ENCODE measurements at regions of chr7 and their contacts with region 1.

Region 1: GRCh38 chr7:44587843-44588711 is 6.0 kb upstream of the TMED4 start:
- DNase-seq: peak; percentile 42
- H3K4me3 Mint-ChIP-seq: no peak overlapping the region
- H3K27ac Mint-ChIP-seq: no peak overlapping the region
- H3K4me1 Mint-ChIP-seq: peaks cover 10% of the 10 kb centered on the region
- H3K27me3 Mint-ChIP-seq: peaks cover 3% of the 10 kb centered on the region

Region 2: GRCh38 chr7:44921607-44922359 is 333.7 kb after region 1 on chr7:
- intact Hi-C with region 1: loop called (anchors 1 kb)
- DNase-seq: peak; percentile 86
- H3K4me3 Mint-ChIP-seq: no peak overlapping the region
- H3K27ac Mint-ChIP-seq: peak overlapping the region; percentile 79
- H3K4me1 Mint-ChIP-seq: peaks cover 15% of the 10 kb centered on the region
- H3K27me3 Mint-ChIP-seq: peaks cover 7% of the 10 kb centered on the region

Region 3: DNA sequence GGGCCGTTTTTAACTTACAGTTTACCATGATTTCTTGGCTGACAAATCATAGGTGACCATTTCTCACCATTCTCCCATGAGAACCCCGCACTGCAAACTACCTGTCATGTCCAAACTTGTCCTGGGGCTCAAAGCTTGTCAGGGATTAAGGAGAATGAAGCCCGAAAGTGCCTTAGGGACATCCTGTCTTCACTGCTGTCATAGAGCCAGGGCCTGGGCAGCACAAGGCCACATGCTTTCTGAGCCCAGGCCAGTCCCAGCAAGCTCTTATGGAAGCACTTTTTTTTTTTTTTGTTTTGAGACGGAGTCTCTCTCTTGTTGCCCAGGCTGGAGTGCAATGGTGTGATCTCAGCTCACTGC is 445.8 kb after region 1 on chr7:
- intact Hi-C with region 1: no loop called
- DNase-seq: no peak
- H3K4me3 Mint-ChIP-seq: no peak overlapping the region
- H3K27ac Mint-ChIP-seq: peak overlapping the region; percentile 63
- H3K4me1 Mint-ChIP-seq: peaks cover 74% of the 10 kb centered on the region
- H3K27me3 Mint-ChIP-seq: no peaks in the 10 kb centered on the region

Measured in activated T-helper 1 cell treated with anti-CD3 and anti-CD28 coated beads, Interleukin-12 subunit alpha, Interleukin-12 subunit beta, Interleukin-2, Interleukin-4 antibody, amounts not matched to agents 30 ng/mL and 10 ng/mL and 1 ng/mL, durations not matched to agents 14 hours and 24 hours and 36 hours (primary cell).